Activated CD4-positive, alpha-beta T cell treated with anti-CD3 and anti-CD28 coated beads for 36 hours (primary cell): ENCODE measurements at regions of chr5 and their contacts with region 1.

Region 1: GRCh38 chr5:136424835-136425584 is 59.7 kb upstream of the TRPC7 start:
- DNase-seq: peak; percentile 79
- ATAC-seq: no peak
- H3K4me3 Mint-ChIP-seq: no peak overlapping the region
- H3K27ac Mint-ChIP-seq: no peak overlapping the region
- H3K4me1 Mint-ChIP-seq: no peaks in the 10 kb centered on the region
- H3K27me3 Mint-ChIP-seq: peaks cover under 1% of the 10 kb centered on the region

Region 2: GRCh38 chr5:135871268-135871915 is 553.6 kb before region 1 on chr5:
- CTCF ChIA-PET with region 1: no interaction called
- POLR2A ChIA-PET with region 1: no interaction called
- intact Hi-C with region 1: no loop called
- DNase-seq: no peak
- ATAC-seq: no peak
- H3K4me3 Mint-ChIP-seq: no peak overlapping the region
- H3K27ac Mint-ChIP-seq: no peak overlapping the region
- H3K4me1 Mint-ChIP-seq: no peaks in the 10 kb centered on the region
- H3K27me3 Mint-ChIP-seq: peaks cover 3% of the 10 kb centered on the region

Region 3: DNA sequence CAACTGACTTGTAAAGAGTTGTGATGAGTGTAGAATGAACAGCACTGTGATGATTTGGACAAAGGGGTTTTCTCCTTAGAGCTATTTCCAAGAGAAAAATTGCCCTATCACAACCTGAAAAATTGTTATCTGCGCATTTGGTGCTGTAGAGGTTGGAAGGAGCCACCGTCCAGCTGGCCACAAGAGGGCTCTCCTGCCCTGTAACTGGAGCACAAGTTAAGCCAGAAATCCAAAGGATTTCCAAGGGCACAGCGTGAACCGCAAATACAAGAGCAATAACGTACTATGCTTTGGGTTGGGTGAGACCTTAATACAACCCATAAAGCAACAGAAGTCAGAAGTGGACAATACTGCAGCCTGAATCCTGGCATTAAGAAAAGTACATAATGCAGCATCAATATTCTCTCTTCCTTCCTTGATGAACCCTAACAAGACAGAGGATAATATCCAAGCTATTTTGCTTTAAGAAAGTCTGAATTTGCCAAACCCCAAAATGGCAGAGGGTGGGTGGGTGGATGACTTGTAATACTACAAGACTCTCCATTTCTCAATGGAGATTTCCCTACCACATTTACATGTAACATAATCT is 175.2 kb before region 1 on chr5:
- CTCF ChIA-PET with region 1: interaction called, 3 read pairs
- POLR2A ChIA-PET with region 1: no interaction called
- intact Hi-C with region 1: loop called in 1 of 2 experiments (anchors 2 kb)
- DNase-seq: peak; percentile 42
- ATAC-seq: no peak
- H3K4me3 Mint-ChIP-seq: no peak overlapping the region
- H3K27ac Mint-ChIP-seq: no peak overlapping the region
- H3K4me1 Mint-ChIP-seq: no peaks in the 10 kb centered on the region
- H3K27me3 Mint-ChIP-seq: peaks cover 5% of the 10 kb centered on the region